Activated CD4-positive, alpha-beta memory T cell treated with anti-CD3 and anti-CD28 coated beads for 36 hours (primary cell): ENCODE measurements at regions of chr13 and their contacts with region 1.

Region 1: GRCh38 chr13:26985285-26985878 is 186.2 kb downstream of the USP12 start:
- DNase-seq: peak; percentile 79
- H3K4me3 Mint-ChIP-seq: no peak overlapping the region
- H3K27ac Mint-ChIP-seq: no peak overlapping the region
- H3K4me1 Mint-ChIP-seq: no peaks in the 10 kb centered on the region
- H3K27me3 Mint-ChIP-seq: peaks cover 9% of the 10 kb centered on the region

Region 2: DNA sequence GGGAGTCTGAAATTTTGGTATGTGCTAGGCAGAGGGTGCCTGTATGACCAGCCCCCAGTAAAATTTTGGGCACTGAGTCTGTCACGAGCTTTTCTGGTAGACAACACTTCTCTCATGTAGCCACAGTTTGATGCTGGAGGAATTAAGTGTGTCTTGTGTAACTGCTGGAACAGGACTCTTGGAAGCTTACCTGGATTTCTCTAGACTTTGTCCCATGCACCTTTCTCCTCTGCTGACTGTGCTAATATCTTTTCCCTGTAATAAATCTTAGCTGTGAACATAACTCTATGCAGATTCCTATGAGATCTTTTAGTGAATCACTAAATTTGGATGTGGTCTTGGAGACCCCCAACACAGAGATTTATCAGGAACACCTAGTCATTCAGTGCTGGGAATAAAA is 777.1 kb before region 1 on chr13:
- CTCF ChIA-PET with region 1: no interaction called
- POLR2A ChIA-PET with region 1: no interaction called
- intact Hi-C with region 1: no loop called
- DNase-seq: no peak
- H3K4me3 Mint-ChIP-seq: no peak overlapping the region
- H3K27ac Mint-ChIP-seq: no peak overlapping the region
- H3K4me1 Mint-ChIP-seq: peaks cover 6% of the 10 kb centered on the region
- H3K27me3 Mint-ChIP-seq: no peaks in the 10 kb centered on the region

Region 3: GRCh38 chr13:26971990-26972887 is 13.1 kb before region 1 on chr13:
- CTCF ChIA-PET with region 1: interaction called, 17 read pairs
- POLR2A ChIA-PET with region 1: no interaction called
- intact Hi-C with region 1: no loop called
- DNase-seq: peak; percentile 59
- H3K4me3 Mint-ChIP-seq: no peak overlapping the region
- H3K27ac Mint-ChIP-seq: no peak overlapping the region
- H3K4me1 Mint-ChIP-seq: peaks cover 5% of the 10 kb centered on the region
- H3K27me3 Mint-ChIP-seq: no peaks in the 10 kb centered on the region

Region 4: DNA sequence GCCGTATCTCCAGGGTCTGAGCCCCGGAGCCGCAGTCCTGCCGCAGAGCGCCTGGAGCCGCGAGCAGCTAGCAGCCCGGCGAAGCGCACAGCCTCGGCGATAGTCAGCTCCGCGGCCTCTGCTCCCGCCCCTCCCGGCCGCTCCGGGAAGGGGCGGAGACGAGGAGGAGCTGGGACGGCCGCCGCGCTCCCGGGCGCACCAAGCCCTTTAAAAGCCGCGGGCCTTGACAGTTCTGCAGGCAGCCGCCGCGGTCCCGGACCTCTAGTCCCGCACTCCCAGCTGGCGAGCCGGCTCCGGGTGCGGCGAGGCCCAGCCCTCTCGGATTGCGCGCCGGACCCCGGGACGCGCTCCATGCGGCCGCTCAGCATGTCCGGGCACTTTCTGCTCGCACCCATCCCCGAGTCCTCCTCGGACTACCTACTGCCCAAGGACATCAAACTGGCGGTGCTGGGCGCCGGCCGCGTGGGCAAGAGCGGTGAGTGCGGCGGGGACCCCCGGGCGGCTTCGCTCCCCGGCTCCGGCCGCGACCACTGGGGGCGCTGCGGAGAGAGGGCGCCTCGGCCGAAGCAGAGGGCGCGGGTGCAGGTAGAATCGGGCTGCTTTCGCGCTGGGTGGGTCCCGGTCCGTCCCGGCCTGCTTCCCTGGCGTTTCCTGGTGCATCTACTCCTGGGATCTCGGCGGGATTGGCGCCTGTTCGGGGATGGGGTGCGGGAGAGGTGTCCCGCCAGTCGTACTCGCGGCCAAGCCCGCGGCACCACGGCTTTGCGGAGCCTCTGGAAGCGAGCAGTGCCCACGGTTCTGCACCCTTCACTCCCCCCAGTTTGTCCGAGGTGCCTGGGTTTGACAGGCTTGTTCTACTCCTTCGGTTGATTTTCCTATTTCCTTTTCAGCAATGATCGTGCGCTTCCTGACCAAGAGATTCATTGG is 285.5 kb after region 1 on chr13 and contains the start of gene RASL11A:
- CTCF ChIA-PET with region 1: interaction called, 15 read pairs
- POLR2A ChIA-PET with region 1: no interaction called
- intact Hi-C with region 1: no loop called
- DNase-seq: peak; percentile 73
- H3K4me3 Mint-ChIP-seq: peak within 1 kb of the TSS; percentile 82
- H3K27ac Mint-ChIP-seq: no peak within 1 kb of the TSS
- H3K4me1 Mint-ChIP-seq: peaks cover 11% of the 10 kb centered on the region
- H3K27me3 Mint-ChIP-seq: peaks cover 15% of the 10 kb centered on the region
- total RNA-seq, gene RASL11A: 4.8 to 6.8 TPM

Region 5: DNA sequence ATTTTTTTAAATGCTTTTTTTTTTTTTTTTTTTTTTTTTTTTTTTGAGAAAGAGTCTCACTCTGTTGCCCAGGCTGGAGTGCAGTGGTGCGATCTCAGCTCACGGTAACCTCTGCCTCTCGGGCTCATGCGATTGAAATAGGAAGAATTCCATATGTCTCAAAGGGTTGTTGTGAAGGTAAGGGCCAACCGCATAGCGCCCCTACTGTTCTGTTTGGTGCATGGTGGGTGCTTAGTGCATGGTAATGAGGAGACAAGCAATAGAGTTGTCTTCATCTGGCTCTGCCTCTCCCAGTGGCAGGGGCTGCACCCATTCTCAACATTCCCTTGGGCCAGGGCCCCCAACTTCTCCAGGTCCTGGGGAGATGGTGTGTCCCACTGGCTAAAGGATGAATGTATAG is 353.9 kb after region 1 on chr13:
- CTCF ChIA-PET with region 1: interaction called, 27 read pairs
- POLR2A ChIA-PET with region 1: no interaction called
- intact Hi-C with region 1: no loop called
- DNase-seq: peak; percentile 58
- H3K4me3 Mint-ChIP-seq: no peak overlapping the region
- H3K27ac Mint-ChIP-seq: no peak overlapping the region
- H3K4me1 Mint-ChIP-seq: no peaks in the 10 kb centered on the region
- H3K27me3 Mint-ChIP-seq: peaks cover 8% of the 10 kb centered on the region

Region 6: GRCh38 chr13:27362064-27362883 is 376.9 kb after region 1 on chr13:
- CTCF ChIA-PET with region 1: interaction called, 211 read pairs
- POLR2A ChIA-PET with region 1: interaction called, 3 read pairs
- intact Hi-C with region 1: loop called (anchors 1 kb)
- DNase-seq: peak; percentile 85
- H3K4me3 Mint-ChIP-seq: no peak overlapping the region
- H3K27ac Mint-ChIP-seq: no peak overlapping the region
- H3K4me1 Mint-ChIP-seq: no peaks in the 10 kb centered on the region
- H3K27me3 Mint-ChIP-seq: peaks cover 22% of the 10 kb centered on the region